ENCODE measurements at regions of chr2 and their contacts with region 1.

Region 1: DNA sequence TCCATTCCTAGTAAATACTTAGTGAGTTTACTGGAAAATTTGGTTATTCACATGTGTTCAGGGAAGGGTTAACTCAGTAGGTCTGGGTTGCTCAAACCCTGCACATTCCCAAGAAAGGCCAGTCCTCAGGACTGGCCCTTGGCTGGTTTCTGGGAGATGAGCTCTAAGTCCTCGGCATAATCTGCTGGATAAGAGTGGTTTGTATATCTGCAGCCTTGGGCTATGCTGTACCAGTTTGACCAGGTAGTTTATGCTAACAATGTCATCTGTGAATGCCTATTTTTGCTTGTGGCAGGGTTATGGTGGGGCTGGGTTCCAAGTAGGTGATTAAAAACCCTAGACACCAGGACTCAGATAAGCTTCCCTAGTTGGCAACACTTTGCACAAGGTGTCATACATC is 7.4 kb upstream of the PTH2R start:
- DNase-seq: no peak
- ATAC-seq: no peak
- H3K4me3 ChIP-seq: no peak overlapping the region
- H3K4me3 Mint-ChIP-seq: no peak overlapping the region
- H3K27ac ChIP-seq: no peak overlapping the region
- H3K27ac Mint-ChIP-seq: no peak overlapping the region
- H3K4me1 ChIP-seq: no peaks in the 10 kb centered on the region
- H3K4me1 Mint-ChIP-seq: no peaks in the 10 kb centered on the region
- H3K27me3 ChIP-seq: peaks cover 0 to 25% (median 4%) of the 10 kb centered on the region in 4 experiments
- H3K27me3 Mint-ChIP-seq: peaks cover 47% of the 10 kb centered on the region
- CTCF ChIP-seq: no peak

Region 2: DNA sequence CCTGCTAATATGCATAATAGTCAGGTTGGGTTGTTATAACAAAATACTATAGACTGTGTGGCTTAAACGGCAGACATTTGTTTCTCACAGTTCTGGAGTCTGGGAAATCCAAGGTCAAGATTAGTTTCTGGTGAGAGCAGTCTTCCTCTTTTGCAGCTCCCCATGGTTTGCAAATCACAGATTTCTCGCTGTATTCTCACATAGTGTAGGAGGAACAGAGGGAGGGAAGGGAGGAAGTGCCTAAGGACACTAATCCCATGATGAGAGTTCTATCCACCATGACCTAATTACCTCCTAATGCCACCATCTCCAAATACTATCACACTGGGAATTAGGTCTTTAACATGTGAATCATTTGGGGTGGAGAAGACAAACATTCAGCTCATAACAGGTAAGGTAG is 12.7 kb before region 1 on chr2:
- CTCF ChIA-PET with region 1: no interaction called
- POLR2A ChIA-PET with region 1: no interaction called
- intact Hi-C with region 1: no loop called
- DNase-seq: no peak
- ATAC-seq: no peak
- H3K4me3 ChIP-seq: no peak overlapping the region
- H3K4me3 Mint-ChIP-seq: no peak overlapping the region
- H3K27ac ChIP-seq: no peak overlapping the region
- H3K27ac Mint-ChIP-seq: no peak overlapping the region
- H3K4me1 ChIP-seq: no peaks in the 10 kb centered on the region
- H3K4me1 Mint-ChIP-seq: no peaks in the 10 kb centered on the region
- H3K27me3 ChIP-seq: peaks cover 0 to 10% (median 7%) of the 10 kb centered on the region in 4 experiments
- H3K27me3 Mint-ChIP-seq: peaks cover 42% of the 10 kb centered on the region
- CTCF ChIP-seq: no peak

Region 3: DNA sequence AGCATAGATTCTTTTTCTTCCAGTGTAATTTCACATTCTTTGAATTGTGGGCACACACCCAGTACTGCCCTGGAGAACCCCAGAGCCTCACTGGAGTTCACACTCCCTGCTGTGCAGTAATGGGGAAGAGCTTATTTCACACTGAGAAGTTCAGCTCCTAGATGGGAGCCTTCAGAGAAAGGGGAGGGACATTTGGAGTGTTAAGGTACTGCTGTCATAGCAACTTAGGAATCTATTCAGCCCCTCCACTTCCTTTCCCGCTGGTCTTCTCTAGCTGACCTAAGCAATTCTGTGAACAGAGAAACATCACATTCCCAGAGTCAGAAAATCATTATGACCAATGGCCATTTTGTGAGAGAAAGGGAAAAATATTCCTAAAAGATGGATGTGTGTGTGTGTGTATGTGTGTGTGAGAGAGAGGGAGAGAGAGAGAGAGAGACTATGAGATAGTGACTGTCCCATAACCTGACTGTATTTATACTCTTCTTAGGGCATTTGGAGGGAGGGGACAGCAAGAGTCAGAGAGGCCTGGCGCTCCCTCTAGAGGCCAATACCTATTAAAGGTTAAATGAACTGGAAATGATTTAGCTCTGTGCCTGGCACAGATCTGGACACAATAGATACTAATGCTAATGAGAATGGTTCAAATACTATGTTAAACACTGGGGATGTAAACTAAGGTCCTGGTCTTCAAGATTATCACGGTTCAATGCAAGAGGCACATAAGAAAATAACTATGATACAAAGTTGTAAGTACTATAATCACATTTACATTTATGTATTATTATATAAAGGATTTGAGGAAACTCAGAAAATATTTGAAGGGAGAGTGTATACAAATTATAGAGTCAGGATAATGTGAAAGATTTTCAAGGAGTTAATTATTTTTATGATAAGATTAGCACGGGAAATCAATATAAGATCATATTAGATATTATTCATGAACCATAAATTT is 1561.8 kb after region 1 on chr2:
- CTCF ChIA-PET with region 1: no interaction called
- POLR2A ChIA-PET with region 1: no interaction called
- intact Hi-C with region 1: loop called (anchors 5 kb)
- DNase-seq: peak; percentile 50
- ATAC-seq: peak; percentile 58
- H3K4me3 ChIP-seq: no peak overlapping the region
- H3K4me3 Mint-ChIP-seq: no peak overlapping the region
- H3K27ac ChIP-seq: no peak overlapping the region
- H3K27ac Mint-ChIP-seq: no peak overlapping the region
- H3K4me1 ChIP-seq: no peaks in the 10 kb centered on the region
- H3K4me1 Mint-ChIP-seq: no peaks in the 10 kb centered on the region
- H3K27me3 ChIP-seq: peaks cover 0 to 4% (median 0%) of the 10 kb centered on the region in 4 experiments
- H3K27me3 Mint-ChIP-seq: peaks cover 16% of the 10 kb centered on the region
- CTCF ChIP-seq: peak; percentile 78